ENCODE measurements at regions of chr1 and their contacts with region 1.

Region 1: DNA sequence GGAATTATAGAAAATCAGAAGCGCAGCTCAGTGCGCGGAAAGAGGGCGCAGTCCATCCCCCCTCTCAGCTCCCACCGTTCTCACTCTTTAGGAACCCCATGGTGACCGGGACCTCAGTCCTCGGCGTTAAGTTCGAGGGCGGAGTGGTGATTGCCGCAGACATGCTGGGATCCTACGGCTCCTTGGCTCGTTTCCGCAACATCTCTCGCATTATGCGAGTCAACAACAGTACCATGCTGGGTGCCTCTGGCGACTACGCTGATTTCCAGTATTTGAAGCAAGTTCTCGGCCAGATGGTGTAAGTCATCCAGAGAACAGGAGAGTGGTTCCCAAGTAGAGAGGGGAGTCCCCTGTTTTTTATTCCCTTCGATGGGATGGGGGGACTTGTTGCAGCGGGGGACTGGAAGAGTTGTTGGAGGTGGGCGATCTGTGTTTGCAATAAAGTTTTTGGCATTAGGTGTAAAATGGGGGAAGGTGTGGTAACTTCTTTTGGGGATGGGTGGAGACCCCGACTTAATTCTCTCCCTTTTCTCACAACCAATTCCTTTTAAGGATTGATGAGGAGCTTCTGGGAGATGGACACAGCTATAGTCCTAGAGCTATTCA is 620 bp downstream of the PSMB4 start:
- DNase-seq: no peak

Region 2: DNA sequence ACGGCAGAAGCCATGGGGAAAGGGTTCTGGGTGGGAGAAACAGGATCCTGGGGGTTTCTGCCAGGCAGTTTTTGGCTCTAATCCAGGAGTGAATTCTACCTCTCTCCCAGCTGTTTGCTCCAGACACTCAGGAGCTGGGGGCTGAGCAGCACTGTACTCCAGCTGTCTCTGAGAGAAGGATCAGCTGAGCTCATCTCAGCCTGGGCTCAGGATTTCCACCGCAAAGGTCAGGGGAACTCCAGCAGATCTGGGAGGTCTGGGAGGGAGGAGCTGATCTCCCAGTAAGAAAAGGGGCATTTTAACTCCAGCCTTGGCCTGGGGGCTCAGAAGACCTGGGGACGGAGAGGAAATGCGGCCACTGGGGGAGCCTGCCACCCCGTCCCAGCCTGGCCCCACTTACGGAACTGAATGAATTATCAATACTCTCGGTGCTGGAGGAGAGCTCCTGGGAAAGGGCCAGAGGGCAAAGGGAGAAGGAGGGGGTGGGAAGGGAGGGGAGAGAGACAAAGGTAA is 90.1 kb before region 1 on chr1:
- intact Hi-C with region 1: loop called in 1 of 2 experiments (anchors 10 kb)
- DNase-seq: no peak

Measured in posterior vena cava (tissue), 2 donors.